CD4-positive, alpha-beta T cell (primary cell): ENCODE measurements at regions of chr16 and their contacts with region 1.

Region 1: DNA sequence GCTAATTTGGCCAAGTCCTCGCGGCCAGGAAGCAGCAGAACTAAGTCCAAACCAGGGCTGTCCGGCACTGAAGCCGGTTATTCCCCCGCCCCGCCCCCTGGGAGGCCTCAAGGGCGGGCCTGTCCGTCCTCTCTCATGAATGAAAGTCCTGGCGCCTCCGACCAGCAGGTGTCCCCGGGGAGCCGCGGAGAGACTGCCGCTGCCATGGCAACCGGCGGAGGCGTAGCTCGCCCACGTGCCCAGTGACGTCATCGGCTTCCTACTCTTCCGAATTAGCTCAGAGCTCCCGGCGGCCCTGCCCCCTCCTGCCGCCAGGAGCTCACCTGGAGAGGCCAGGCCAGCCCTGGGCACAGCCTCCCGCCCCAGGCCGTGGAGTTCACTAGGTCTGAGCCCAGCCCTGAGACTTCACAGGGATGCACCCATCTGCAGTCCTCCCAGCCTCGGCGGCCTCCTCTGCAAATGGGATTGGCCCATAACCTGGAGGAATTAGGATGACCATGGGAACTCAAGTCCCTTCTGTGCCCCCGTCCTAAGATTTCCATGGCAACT is 1.3 kb downstream of the SPATA2L start:
- DNase-seq: peak; percentile 87 to 99 (median 94)
- ATAC-seq: peak; percentile 13
- H3K4me3 ChIP-seq: peak overlapping the region; percentile 63
- H3K4me3 Mint-ChIP-seq: peak overlapping the region; percentile 83
- H3K27ac ChIP-seq: peak overlapping the region; percentile 77 to 92
- H3K27ac Mint-ChIP-seq: peak overlapping the region; percentile 81
- H3K4me1 ChIP-seq: peaks cover 44% of the 10 kb centered on the region
- H3K4me1 Mint-ChIP-seq: peaks cover 16% of the 10 kb centered on the region
- H3K27me3 ChIP-seq: no peaks in the 10 kb centered on the region
- H3K27me3 Mint-ChIP-seq: no peaks in the 10 kb centered on the region
- CTCF ChIP-seq: peak; percentile 80

Region 2: GRCh38 chr16:89686520-89687091 is 13.6 kb before region 1 on chr16 and contains the start of gene CDK10:
- CTCF ChIA-PET with region 1: interaction called, 20 read pairs
- POLR2A ChIA-PET with region 1: interaction called, 20 read pairs
- intact Hi-C with region 1: loop called in 1 of 2 experiments (anchors 1 kb)
- DNase-seq: peak; percentile 72 to 92 (median 86)
- ATAC-seq: peak; percentile 91
- H3K4me3 ChIP-seq: peak within 1 kb of the TSS; percentile 87
- H3K4me3 Mint-ChIP-seq: peak within 1 kb of the TSS; percentile 94
- H3K27ac ChIP-seq: peak within 1 kb of the TSS; percentile 73 to 79
- H3K27ac Mint-ChIP-seq: peak within 1 kb of the TSS; percentile 78
- H3K4me1 ChIP-seq: peaks cover 20% of the 10 kb centered on the region
- H3K4me1 Mint-ChIP-seq: peaks cover 5% of the 10 kb centered on the region
- H3K27me3 ChIP-seq: no peaks in the 10 kb centered on the region
- H3K27me3 Mint-ChIP-seq: no peaks in the 10 kb centered on the region
- CTCF ChIP-seq: no peak
- total RNA-seq, gene CDK10: 58.9 to 62.8 TPM

Region 3: GRCh38 chr16:89737341-89738071 is 37.3 kb after region 1 on chr16:
- CTCF ChIA-PET with region 1: interaction called, 16 read pairs
- POLR2A ChIA-PET with region 1: interaction called, 13 read pairs
- intact Hi-C with region 1: no loop called
- DNase-seq: peak in 13 of 14 experiments; percentile 28 to 86 (median 54)
- ATAC-seq: peak; percentile 79
- H3K4me3 ChIP-seq: no peak overlapping the region
- H3K4me3 Mint-ChIP-seq: peak overlapping the region; percentile 69
- H3K27ac ChIP-seq: no peak overlapping the region
- H3K27ac Mint-ChIP-seq: peak overlapping the region; percentile 80
- H3K4me1 ChIP-seq: peaks cover 69% of the 10 kb centered on the region
- H3K4me1 Mint-ChIP-seq: peaks cover 44% of the 10 kb centered on the region
- H3K27me3 ChIP-seq: no peaks in the 10 kb centered on the region
- H3K27me3 Mint-ChIP-seq: no peaks in the 10 kb centered on the region
- CTCF ChIP-seq: no peak

Region 4: DNA sequence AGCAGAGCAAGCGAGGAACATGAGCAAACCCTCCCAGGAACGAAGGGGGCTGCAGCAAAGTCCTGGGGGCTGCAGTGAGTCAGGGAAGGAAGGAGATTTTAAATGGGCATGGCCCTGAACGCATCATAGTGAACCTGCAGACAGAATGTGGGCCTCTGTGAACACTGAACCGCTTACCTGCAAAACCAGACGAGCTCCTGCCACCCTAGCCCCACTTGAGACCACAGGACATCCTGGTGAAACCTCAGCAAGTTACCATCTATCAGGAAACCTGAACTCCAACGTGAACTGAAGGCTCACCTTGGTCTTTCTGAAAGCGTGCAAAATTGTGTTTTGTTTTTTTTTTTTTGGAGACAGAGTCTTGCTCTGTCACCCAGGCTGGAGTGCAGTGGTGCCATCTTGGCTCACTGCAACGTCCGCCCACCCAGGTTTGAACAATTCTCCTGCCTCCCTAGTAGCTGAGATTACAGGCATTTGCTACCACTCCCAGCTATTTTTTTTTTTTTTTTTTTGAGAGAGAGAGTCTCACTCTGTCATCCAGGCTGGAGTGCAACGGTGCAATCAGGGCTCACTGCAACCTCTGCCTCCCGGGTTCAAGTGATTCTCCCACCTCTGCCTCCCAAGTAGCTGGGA is 85.5 kb after region 1 on chr16:
- CTCF ChIA-PET with region 1: interaction called, 12 read pairs
- POLR2A ChIA-PET with region 1: no interaction called
- intact Hi-C with region 1: loop called in 1 of 2 experiments (anchors 2 kb)
- DNase-seq: peak in 13 of 14 experiments; percentile 21 to 84 (median 37)
- ATAC-seq: peak; percentile 77
- H3K4me3 ChIP-seq: no peak overlapping the region
- H3K4me3 Mint-ChIP-seq: peak overlapping the region; percentile 57
- H3K27ac ChIP-seq: no peak overlapping the region
- H3K27ac Mint-ChIP-seq: peak overlapping the region; percentile 69
- H3K4me1 ChIP-seq: peaks cover 37% of the 10 kb centered on the region
- H3K4me1 Mint-ChIP-seq: peaks cover 31% of the 10 kb centered on the region
- H3K27me3 ChIP-seq: no peaks in the 10 kb centered on the region
- H3K27me3 Mint-ChIP-seq: no peaks in the 10 kb centered on the region
- CTCF ChIP-seq: no peak

Region 5: GRCh38 chr16:89860747-89861304 is 160.7 kb after region 1 on chr16:
- CTCF ChIA-PET with region 1: interaction called, 73 read pairs
- POLR2A ChIA-PET with region 1: interaction called, 14 read pairs
- intact Hi-C with region 1: loop called (anchors 1 kb)
- DNase-seq: peak; percentile 56 to 85 (median 70)
- ATAC-seq: peak; percentile 85
- H3K4me3 ChIP-seq: no peak overlapping the region
- H3K4me3 Mint-ChIP-seq: peak overlapping the region; percentile 21
- H3K27ac ChIP-seq: no peak overlapping the region
- H3K27ac Mint-ChIP-seq: peak overlapping the region; percentile 57
- H3K4me1 ChIP-seq: peaks cover 42% of the 10 kb centered on the region
- H3K4me1 Mint-ChIP-seq: peaks cover 29% of the 10 kb centered on the region
- H3K27me3 ChIP-seq: no peaks in the 10 kb centered on the region
- H3K27me3 Mint-ChIP-seq: no peaks in the 10 kb centered on the region
- CTCF ChIP-seq: peak; percentile 98

Region 6: DNA sequence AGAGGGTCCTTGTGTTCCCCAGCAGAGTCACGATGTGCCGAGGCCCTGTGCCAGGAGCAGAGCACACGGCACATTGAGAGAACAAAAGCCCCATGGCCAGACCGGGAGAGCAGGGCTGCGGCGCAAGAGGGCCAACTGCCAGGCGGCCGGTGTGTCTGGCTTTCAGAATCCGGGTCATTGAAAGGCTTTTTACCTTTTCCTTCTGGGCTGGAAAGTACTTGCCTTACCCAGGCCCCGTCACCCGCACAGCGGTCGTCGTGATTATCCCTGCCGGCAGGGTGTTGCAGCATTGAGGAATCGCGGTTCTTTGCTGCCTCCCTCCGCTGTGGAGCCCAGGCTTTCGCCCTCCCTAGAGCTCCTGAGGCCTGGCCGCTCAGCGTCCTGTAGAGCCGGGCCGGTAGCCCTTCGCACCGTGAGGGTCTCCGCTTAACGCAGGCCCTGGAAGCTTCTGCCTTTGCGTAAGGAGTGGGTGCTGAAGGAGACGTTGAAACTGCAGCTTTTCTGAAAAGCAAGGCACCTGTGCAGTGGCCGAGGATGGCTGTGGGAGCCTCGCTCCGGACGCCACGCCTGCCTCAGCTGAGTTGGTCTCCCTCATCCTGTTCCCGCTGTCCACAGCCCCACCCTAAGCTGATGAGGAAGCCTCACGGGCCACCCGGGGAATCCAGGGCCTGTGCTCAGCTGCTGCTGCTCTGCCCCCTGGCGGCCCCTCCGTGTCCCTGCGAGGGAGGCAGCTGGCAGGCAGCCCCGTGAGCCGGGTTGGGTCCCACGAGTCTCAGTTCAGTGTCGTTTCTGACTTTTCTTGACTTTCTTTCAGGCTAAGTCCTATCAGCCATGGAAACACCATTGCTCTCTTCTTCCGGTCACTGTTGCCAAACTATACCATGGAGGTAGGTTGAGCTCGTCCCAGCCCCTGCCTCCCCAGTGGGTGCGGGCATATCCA is 209.9 kb after region 1 on chr16:
- CTCF ChIA-PET with region 1: interaction called, 11 read pairs
- POLR2A ChIA-PET with region 1: interaction called, 11 read pairs
- intact Hi-C with region 1: loop called in 1 of 2 experiments (anchors 2 kb)
- DNase-seq: peak; percentile 51 to 84 (median 64)
- ATAC-seq: peak; percentile 85
- H3K4me3 ChIP-seq: no peak overlapping the region
- H3K4me3 Mint-ChIP-seq: no peak overlapping the region
- H3K27ac ChIP-seq: no peak overlapping the region
- H3K27ac Mint-ChIP-seq: no peak overlapping the region
- H3K4me1 ChIP-seq: peaks cover 11% of the 10 kb centered on the region
- H3K4me1 Mint-ChIP-seq: peaks cover 3% of the 10 kb centered on the region
- H3K27me3 ChIP-seq: no peaks in the 10 kb centered on the region
- H3K27me3 Mint-ChIP-seq: no peaks in the 10 kb centered on the region
- CTCF ChIP-seq: peak; percentile 83